Mucosa of descending colon (tissue), 3 donors: ENCODE measurements at regions of chr3 and their contacts with region 1.

Region 1: GRCh38 chr3:177337541-177338331 is 140.5 kb upstream of the TBL1XR1 start:
- DNase-seq: no peak
- ATAC-seq: no peak
- H3K4me3 ChIP-seq: no peak overlapping the region
- H3K4me1 ChIP-seq: peaks cover 47% of the 10 kb centered on the region
- CTCF ChIP-seq: no peak

Region 2: GRCh38 chr3:177220136-177220974 is 117.4 kb before region 1 on chr3:
- intact Hi-C with region 1: no loop called
- DNase-seq: no peak
- ATAC-seq: no peak
- H3K4me3 ChIP-seq: no peak overlapping the region
- H3K4me1 ChIP-seq: peaks cover 8% of the 10 kb centered on the region
- CTCF ChIP-seq: no peak

Region 3: DNA sequence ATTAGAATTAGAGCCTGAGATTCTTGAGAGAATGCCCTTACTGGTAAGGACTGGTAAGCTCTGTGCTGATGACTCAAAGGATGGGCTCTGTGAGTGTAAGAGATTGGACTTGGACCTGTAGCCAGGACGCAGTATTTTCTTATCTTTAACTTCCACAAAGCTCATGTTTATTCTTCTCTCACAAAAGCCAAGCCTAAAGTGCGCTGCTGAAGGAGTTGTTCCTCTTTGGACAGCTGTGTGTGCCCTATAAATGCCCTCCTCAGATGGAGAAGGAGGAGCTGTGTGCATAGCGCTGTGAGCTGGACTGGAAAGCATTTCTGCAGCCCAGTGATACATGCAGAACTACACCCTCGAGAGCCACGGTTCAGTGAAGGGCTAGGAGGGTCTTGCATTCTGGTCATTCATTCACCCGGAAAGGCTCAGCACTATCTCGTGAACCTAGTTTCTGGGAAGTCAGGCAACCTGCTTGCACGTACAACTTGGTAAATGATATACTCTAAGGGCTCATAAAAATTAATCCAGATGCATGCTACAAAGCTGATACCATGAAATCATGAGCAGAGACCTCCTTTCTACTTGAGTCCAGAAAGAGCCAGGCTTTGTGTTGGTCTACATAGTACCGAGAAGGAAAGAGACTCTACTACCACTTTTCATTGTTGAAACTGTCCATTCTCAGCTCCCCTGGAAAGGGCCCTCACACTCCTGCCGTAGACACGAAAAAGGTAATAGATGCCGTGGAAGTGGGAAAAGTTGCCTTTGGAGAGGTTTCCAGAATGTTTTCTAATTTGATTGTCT is 37.5 kb before region 1 on chr3:
- intact Hi-C with region 1: loop called in 1 of 2 experiments (anchors 5 kb)
- DNase-seq: peak in 2 of 3 donors; percentile 73 to 82
- ATAC-seq: peak; percentile 89
- H3K4me3 ChIP-seq: no peak overlapping the region
- H3K4me1 ChIP-seq: peaks cover 42% of the 10 kb centered on the region
- CTCF ChIP-seq: no peak

Region 4: GRCh38 chr3:177468331-177468730 is 130.6 kb after region 1 on chr3:
- intact Hi-C with region 1: no loop called
- DNase-seq: no peak
- ATAC-seq: no peak
- H3K4me3 ChIP-seq: no peak overlapping the region
- H3K4me1 ChIP-seq: peaks cover 3% of the 10 kb centered on the region
- CTCF ChIP-seq: no peak